K562 (cell line): ENCODE measurements at regions of chr7 and their contacts with region 1.

Region 1: GRCh38 chr7:127651556-127652332 is at the start of gene SND1:
- DNase-seq: peak; percentile 99 to 100 (median 100)
- ATAC-seq: peak; percentile 96
- H3K4me3 ChIP-seq: peak within 1 kb of the TSS; percentile 86
- H3K27ac ChIP-seq: peak within 1 kb of the TSS; percentile 90
- H3K4me1 ChIP-seq: peaks cover 17 to 58% of the 10 kb centered on the region in 2 experiments
- H3K27me3 ChIP-seq: no peaks in the 10 kb centered on the region
- CTCF ChIP-seq: peak in 1 of 3 experiments; percentile 3; a peak in 1 of 6 replicates
- EP300 ChIP-seq: no peak
- POLR2A ChIP-seq: peak; percentile 98
- RAD21 ChIP-seq: no peak; a peak in 1 of 4 replicates
- polyA plus RNA-seq, gene SND1: 46.5 to 87.6 TPM

Region 2: GRCh38 chr7:127383123-127383835 is 268.5 kb before region 1 on chr7:
- CTCF ChIA-PET with region 1: no interaction called
- POLR2A ChIA-PET with region 1: interaction called, 3 read pairs
- in situ Hi-C with region 1: no loop called
- intact Hi-C with region 1: loop called (anchors 5 kb)
- DNase-seq: peak; percentile 46 to 75 (median 56)
- ATAC-seq: peak; percentile 91
- H3K4me3 ChIP-seq: no peak overlapping the region
- H3K27ac ChIP-seq: peak overlapping the region; percentile 76
- H3K4me1 ChIP-seq: peaks cover 9 to 31% of the 10 kb centered on the region in 2 experiments
- H3K27me3 ChIP-seq: no peaks in the 10 kb centered on the region
- CTCF ChIP-seq: no peak
- EP300 ChIP-seq: no peak
- POLR2A ChIP-seq: peak; percentile 41; the same call in 1 of the 2 replicates
- RAD21 ChIP-seq: no peak

Region 3: DNA sequence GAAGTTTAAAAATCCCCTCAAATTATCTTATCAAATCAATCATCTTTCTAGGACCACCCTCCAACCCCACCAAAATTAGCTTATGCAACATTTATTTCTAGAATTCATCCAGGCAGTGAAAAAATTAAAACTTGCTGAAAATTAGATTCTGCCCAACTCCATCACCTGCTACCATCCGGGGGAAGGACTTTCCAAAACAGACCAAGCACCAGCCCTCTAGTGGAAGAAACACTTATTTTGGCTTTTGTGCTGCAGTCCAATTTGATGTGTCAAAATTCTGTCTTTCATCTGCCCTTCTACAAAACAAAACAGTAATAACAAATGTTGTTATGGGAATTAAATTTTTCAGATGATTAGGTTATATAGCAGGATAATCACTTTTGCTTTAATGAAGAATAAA is 101.5 kb before region 1 on chr7:
- CTCF ChIA-PET with region 1: no interaction called
- POLR2A ChIA-PET with region 1: no interaction called
- in situ Hi-C with region 1: no loop called
- intact Hi-C with region 1: no loop called
- DNase-seq: peak in 2 of 4 experiments; percentile 37 to 40
- ATAC-seq: peak; percentile 47; the same call in 1 of the 3 replicates
- H3K4me3 ChIP-seq: no peak overlapping the region
- H3K27ac ChIP-seq: no peak overlapping the region
- H3K4me1 ChIP-seq: no peaks in the 10 kb centered on the region
- H3K27me3 ChIP-seq: no peaks in the 10 kb centered on the region
- CTCF ChIP-seq: peak; percentile 21 to 37 (median 36); a peak in 3 of 6 replicates
- EP300 ChIP-seq: no peak
- POLR2A ChIP-seq: no peak
- RAD21 ChIP-seq: no peak

Region 4: GRCh38 chr7:127566242-127566641 is 85.5 kb before region 1 on chr7:
- CTCF ChIA-PET with region 1: no interaction called
- POLR2A ChIA-PET with region 1: no interaction called
- in situ Hi-C with region 1: no loop called
- intact Hi-C with region 1: no loop called
- DNase-seq: no peak
- ATAC-seq: no peak
- H3K4me3 ChIP-seq: no peak overlapping the region
- H3K27ac ChIP-seq: no peak overlapping the region
- H3K4me1 ChIP-seq: no peaks in the 10 kb centered on the region
- H3K27me3 ChIP-seq: no peaks in the 10 kb centered on the region
- CTCF ChIP-seq: no peak
- EP300 ChIP-seq: no peak
- POLR2A ChIP-seq: no peak
- RAD21 ChIP-seq: no peak

Region 5: GRCh38 chr7:127585044-127585953 is 66.4 kb before region 1 on chr7 and contains the start of gene GCC1:
- CTCF ChIA-PET with region 1: no interaction called
- POLR2A ChIA-PET with region 1: interaction called, 9 read pairs
- in situ Hi-C with region 1: no loop called
- intact Hi-C with region 1: loop called (anchors 5 kb)
- DNase-seq: peak; percentile 97 to 99 (median 98)
- ATAC-seq: peak; percentile 84
- H3K4me3 ChIP-seq: peak within 1 kb of the TSS; percentile 86
- H3K27ac ChIP-seq: peak within 1 kb of the TSS; percentile 58
- H3K4me1 ChIP-seq: peaks cover 28 to 49% of the 10 kb centered on the region in 2 experiments; a peak in 4 of 5 replicates
- H3K27me3 ChIP-seq: no peaks in the 10 kb centered on the region
- CTCF ChIP-seq: no peak
- EP300 ChIP-seq: no peak
- POLR2A ChIP-seq: peak; percentile 95
- RAD21 ChIP-seq: no peak
- polyA plus RNA-seq, gene GCC1: 1.9 to 2.3 TPM

Region 6: GRCh38 chr7:127638197-127638755 is 13.5 kb before region 1 on chr7:
- CTCF ChIA-PET with region 1: interaction called, 3 read pairs
- POLR2A ChIA-PET with region 1: interaction called, 16 read pairs
- in situ Hi-C with region 1: no loop called
- intact Hi-C with region 1: no loop called
- DNase-seq: no peak
- ATAC-seq: no peak
- H3K4me3 ChIP-seq: no peak overlapping the region
- H3K27ac ChIP-seq: no peak overlapping the region
- H3K4me1 ChIP-seq: no peaks in the 10 kb centered on the region
- H3K27me3 ChIP-seq: peaks cover 12 to 23% of the 10 kb centered on the region in 2 experiments; a peak in 3 of 5 replicates
- CTCF ChIP-seq: no peak
- EP300 ChIP-seq: no peak
- POLR2A ChIP-seq: no peak
- RAD21 ChIP-seq: no peak

Region 7: DNA sequence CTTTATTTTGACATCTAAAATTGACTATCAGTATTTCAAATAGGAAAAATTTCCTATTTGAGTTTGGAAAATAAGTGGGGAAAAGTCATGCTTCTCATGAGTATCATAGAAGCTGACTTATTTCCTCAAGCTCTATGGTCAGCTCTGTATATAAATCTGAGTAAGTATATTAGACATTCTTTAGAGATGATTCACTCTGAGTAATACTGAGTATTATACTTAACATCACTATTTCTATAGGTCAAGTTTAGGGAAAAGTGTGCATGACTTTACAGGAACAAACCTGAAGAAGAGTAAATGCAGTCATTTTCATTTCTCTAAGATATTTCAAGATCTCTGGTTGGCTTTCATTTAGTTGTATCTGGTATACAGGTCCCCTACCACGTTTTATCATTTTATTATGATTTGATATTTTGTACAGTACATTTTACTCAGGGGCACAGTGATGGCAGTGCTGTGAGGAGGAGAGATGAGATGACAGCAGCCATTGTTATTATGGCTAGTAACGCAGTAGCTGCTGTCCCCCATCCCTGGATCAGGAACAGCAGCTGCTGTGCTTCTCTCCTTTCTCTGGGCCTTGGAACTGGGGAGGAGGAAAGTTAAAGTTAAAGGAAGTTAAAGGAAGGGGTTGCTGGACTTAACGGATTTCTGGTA is 15.4 kb after region 1 on chr7:
- CTCF ChIA-PET with region 1: no interaction called
- POLR2A ChIA-PET with region 1: interaction called, 17 read pairs
- in situ Hi-C with region 1: no loop called
- intact Hi-C with region 1: no loop called
- DNase-seq: no peak
- ATAC-seq: no peak
- H3K4me3 ChIP-seq: no peak overlapping the region
- H3K27ac ChIP-seq: no peak overlapping the region
- H3K4me1 ChIP-seq: no peaks in the 10 kb centered on the region
- H3K27me3 ChIP-seq: no peaks in the 10 kb centered on the region
- CTCF ChIP-seq: no peak
- EP300 ChIP-seq: no peak
- POLR2A ChIP-seq: no peak
- RAD21 ChIP-seq: no peak

Region 8: DNA sequence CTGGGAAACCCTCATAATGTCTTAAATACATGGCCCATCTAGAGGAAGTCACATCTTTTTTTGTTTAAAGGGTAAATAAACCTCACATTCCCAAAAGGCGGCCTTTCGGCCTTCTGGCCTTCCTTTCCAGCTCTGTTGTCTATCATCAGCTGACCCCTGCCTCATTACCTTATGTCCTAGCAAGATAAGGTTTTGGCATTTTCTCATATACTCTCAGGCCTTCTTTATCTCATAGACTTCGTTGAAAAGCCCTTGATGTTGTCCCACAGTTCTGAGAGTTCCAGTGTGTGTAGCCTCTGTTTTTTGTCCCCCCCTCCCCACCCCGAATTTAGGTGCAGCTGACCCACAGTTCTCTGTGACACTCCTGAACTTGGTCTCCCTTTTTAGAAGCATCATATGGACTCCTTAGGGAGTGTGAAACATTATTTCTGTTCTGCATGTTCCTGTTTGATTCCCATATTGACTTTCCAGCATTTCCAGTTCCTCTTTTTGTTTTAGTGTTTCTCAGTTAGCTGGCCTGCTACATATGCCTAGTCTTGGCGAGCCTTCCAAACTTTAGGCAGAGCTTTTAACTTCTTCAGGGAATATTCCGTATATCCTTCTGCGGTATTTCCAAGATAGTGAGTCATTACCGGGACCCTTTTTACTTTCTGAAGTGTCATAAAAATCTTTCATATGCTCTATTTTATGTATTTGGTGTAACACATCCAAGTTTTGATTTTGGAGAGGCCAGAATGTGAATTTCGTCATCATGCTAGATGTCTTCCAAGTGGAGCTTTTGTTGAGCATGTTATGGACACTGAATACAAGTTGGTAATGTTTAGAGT is 241.0 kb after region 1 on chr7:
- CTCF ChIA-PET with region 1: no interaction called
- POLR2A ChIA-PET with region 1: no interaction called
- in situ Hi-C with region 1: no loop called
- intact Hi-C with region 1: loop called (anchors 5 kb)
- DNase-seq: peak; percentile 73 to 93 (median 83)
- ATAC-seq: peak; percentile 74
- H3K4me3 ChIP-seq: no peak overlapping the region
- H3K27ac ChIP-seq: peak overlapping the region; percentile 47
- H3K4me1 ChIP-seq: peaks cover 44 to 75% of the 10 kb centered on the region in 2 experiments
- H3K27me3 ChIP-seq: no peaks in the 10 kb centered on the region
- CTCF ChIP-seq: no peak; a peak in 1 of 6 replicates
- EP300 ChIP-seq: peak; percentile 96
- POLR2A ChIP-seq: no peak
- RAD21 ChIP-seq: 0 out of 4 replicates have a peak, but pooled peaks have one; percentile 8 to 23

Region 9: GRCh38 chr7:127983804-127984332 is 332.1 kb after region 1 on chr7:
- CTCF ChIA-PET with region 1: no interaction called
- POLR2A ChIA-PET with region 1: no interaction called
- in situ Hi-C with region 1: no loop called
- intact Hi-C with region 1: loop called (anchors 5 kb)
- DNase-seq: peak; percentile 51 to 85 (median 66)
- ATAC-seq: peak; percentile 79
- H3K4me3 ChIP-seq: no peak overlapping the region
- H3K27ac ChIP-seq: peak overlapping the region; percentile 55
- H3K4me1 ChIP-seq: peaks cover 12 to 44% of the 10 kb centered on the region in 2 experiments
- H3K27me3 ChIP-seq: no peaks in the 10 kb centered on the region
- CTCF ChIP-seq: no peak
- EP300 ChIP-seq: 0 out of 2 replicates have a peak, but pooled peaks have one; percentile 33
- POLR2A ChIP-seq: no peak
- RAD21 ChIP-seq: no peak